Psoas muscle (tissue), 8 donors: ENCODE measurements at regions of chr12 and their contacts with region 1.

Region 1: GRCh38 chr12:48131517-48131916 is 12.4 kb downstream of the PFKM start:
- DNase-seq: no peak
- ATAC-seq: peak in 2 of 4 donors; percentile 24 to 47
- H3K4me3 ChIP-seq: no peak overlapping the region
- H3K27ac ChIP-seq: peak overlapping the region; percentile 87
- H3K4me1 ChIP-seq: peaks cover 56% of the 10 kb centered on the region
- H3K27me3 ChIP-seq: no peaks in the 10 kb centered on the region
- CTCF ChIP-seq: no peak

Region 2: GRCh38 chr12:47458270-47458669 is 673.2 kb before region 1 on chr12:
- intact Hi-C with region 1: no loop called
- DNase-seq: no peak
- ATAC-seq: no peak
- H3K4me3 ChIP-seq: no peak overlapping the region
- H3K27ac ChIP-seq: no peak overlapping the region
- H3K4me1 ChIP-seq: no peaks in the 10 kb centered on the region
- H3K27me3 ChIP-seq: no peaks in the 10 kb centered on the region
- CTCF ChIP-seq: no peak

Region 3: DNA sequence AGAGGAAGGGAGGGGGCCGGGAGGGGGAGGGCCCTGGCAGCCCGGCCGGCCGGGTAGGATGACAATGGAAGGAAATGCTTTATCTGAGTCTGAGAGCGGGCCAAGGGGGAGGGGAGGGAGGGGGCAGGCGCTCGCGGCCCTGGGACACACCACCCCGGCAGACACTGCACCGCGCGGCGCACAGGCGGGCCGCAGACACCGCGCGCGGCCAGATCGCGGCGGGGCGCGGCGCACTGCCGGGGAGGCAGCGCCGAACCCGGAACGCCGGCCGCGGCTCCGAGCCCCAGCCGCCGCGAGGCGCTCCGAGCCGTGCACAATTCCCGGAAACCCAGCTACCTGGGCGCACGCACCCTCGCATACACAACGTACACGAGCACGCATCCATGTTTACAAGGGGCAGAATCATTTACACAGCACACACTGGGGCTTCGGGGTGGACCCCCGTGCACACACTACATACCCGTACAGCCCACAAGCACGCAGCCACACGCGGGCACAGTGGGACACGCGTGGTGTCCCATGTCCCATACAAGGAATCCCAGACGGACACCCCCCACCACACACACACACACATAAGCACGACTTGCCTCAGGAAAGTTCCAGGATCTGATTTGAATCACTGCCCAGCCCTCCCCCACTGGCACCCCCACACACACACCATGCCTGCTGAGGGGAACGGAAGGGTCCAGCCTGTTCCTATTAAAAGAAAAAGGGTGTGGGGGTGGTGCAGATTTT is 311.5 kb before region 1 on chr12 and contains the start of gene HDAC7:
- intact Hi-C with region 1: no loop called
- DNase-seq: peak; percentile 91 to 92
- ATAC-seq: peak; percentile 71 to 78 (median 75)
- H3K4me3 ChIP-seq: peak within 1 kb of the TSS; percentile 80
- H3K27ac ChIP-seq: peak within 1 kb of the TSS; percentile 91
- H3K4me1 ChIP-seq: peaks cover 37% of the 10 kb centered on the region
- H3K27me3 ChIP-seq: no peaks in the 10 kb centered on the region
- CTCF ChIP-seq: no peak
- total RNA-seq, gene HDAC7: 21.4 to 27.8 (median 23.5) TPM

Region 4: GRCh38 chr12:48143898-48144297 is 12.4 kb after region 1 on chr12:
- intact Hi-C with region 1: loop called in 1 of 2 experiments (anchors 2 kb)
- DNase-seq: no peak
- ATAC-seq: peak in 3 of 4 donors; percentile 2 to 9 (median 4)
- H3K4me3 ChIP-seq: no peak overlapping the region
- H3K27ac ChIP-seq: peak overlapping the region; percentile 97
- H3K4me1 ChIP-seq: peaks cover 4% of the 10 kb centered on the region
- H3K27me3 ChIP-seq: no peaks in the 10 kb centered on the region
- CTCF ChIP-seq: no peak